ENCODE measurements at regions of chr1 and their contacts with region 1.

Region 1: GRCh38 chr1:61184040-61184713 is 101.8 kb downstream of the NFIA start:
- DNase-seq: peak; percentile 94 to 97
- ATAC-seq: peak; percentile 93
- H3K4me3 ChIP-seq: peak overlapping the region; percentile 8 to 71
- H3K27ac ChIP-seq: peak overlapping the region; percentile 69 to 86
- H3K4me1 ChIP-seq: peaks cover 4 to 11% of the 10 kb centered on the region in 2 donors
- H3K27me3 ChIP-seq: no peaks in the 10 kb centered on the region

Region 2: GRCh38 chr1:61077676-61078541 is 106.3 kb before region 1 on chr1:
- intact Hi-C with region 1: loop called in 1 of 2 experiments (anchors 5 kb)
- DNase-seq: peak; percentile 92 to 96
- ATAC-seq: peak; percentile 83
- H3K4me3 ChIP-seq: peak overlapping the region; percentile 46 to 58
- H3K27ac ChIP-seq: peak overlapping the region in 1 of 2 donors; percentile 33
- H3K4me1 ChIP-seq: no peaks in the 10 kb centered on the region
- H3K27me3 ChIP-seq: no peaks in the 10 kb centered on the region

Region 3: DNA sequence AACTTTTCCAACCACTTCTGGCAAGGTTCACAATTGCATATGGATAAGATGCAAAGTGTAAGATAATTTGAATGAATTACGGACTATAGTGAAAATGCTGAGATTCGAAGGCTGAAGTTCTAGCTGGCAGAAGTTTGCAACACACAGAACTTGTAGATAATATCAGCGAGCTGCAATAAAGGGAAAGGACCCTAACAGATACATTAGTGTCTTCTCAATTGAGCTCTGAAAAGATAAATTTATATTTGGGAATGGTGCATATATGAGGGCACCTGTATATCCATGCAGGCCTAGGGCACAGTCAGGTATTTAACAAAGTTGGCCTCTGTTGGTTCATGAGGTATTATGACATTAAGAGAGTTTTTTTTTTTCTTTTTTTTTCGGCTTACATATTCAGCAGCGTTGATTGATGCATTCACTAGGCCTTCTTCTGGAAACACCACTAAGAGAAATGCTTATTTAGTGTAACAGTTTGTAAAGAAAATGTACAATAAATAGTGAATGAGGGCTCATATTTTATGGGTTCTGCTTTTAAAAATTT is 99.6 kb before region 1 on chr1:
- intact Hi-C with region 1: loop called (anchors 5 kb)
- DNase-seq: no peak
- ATAC-seq: no peak
- H3K4me3 ChIP-seq: peak overlapping the region; percentile 97
- H3K27ac ChIP-seq: peak overlapping the region; percentile 59 to 99
- H3K4me1 ChIP-seq: no peaks in the 10 kb centered on the region
- H3K27me3 ChIP-seq: no peaks in the 10 kb centered on the region

Region 4: GRCh38 chr1:61149010-61149860 is 34.9 kb before region 1 on chr1:
- intact Hi-C with region 1: loop called in 1 of 2 experiments (anchors 5 kb)
- DNase-seq: no peak
- ATAC-seq: no peak
- H3K4me3 ChIP-seq: no peak overlapping the region
- H3K27ac ChIP-seq: peak overlapping the region; percentile 18 to 36
- H3K4me1 ChIP-seq: peaks cover 13 to 24% of the 10 kb centered on the region in 2 donors
- H3K27me3 ChIP-seq: no peaks in the 10 kb centered on the region

Region 5: DNA sequence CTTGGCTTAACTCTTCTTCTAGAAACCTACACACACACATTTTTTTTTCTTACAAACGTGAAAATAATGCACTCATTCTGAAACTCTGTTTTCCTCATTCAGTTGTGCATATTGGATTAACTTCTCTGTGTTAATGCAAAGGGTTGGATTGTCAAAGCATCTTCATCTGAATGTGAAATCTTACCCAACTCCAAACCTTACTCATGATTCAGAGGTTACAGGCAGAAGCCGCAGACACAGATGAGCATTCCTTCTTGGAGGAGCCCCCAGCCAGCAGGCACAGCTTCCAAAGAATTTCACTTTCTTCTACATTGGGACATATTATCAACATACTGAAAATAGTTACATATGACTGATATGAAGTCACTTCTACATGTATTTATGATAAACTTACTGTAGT is 573.8 kb after region 1 on chr1:
- intact Hi-C with region 1: no loop called
- DNase-seq: no peak
- ATAC-seq: no peak
- H3K4me3 ChIP-seq: no peak overlapping the region
- H3K27ac ChIP-seq: no peak overlapping the region
- H3K4me1 ChIP-seq: no peaks in the 10 kb centered on the region
- H3K27me3 ChIP-seq: no peaks in the 10 kb centered on the region

Measured in aorta (tissue), 5 donors.